Endothelial cell of umbilical vein (primary cell): ENCODE measurements at regions of chr7 and their contacts with region 1.

Region 1: DNA sequence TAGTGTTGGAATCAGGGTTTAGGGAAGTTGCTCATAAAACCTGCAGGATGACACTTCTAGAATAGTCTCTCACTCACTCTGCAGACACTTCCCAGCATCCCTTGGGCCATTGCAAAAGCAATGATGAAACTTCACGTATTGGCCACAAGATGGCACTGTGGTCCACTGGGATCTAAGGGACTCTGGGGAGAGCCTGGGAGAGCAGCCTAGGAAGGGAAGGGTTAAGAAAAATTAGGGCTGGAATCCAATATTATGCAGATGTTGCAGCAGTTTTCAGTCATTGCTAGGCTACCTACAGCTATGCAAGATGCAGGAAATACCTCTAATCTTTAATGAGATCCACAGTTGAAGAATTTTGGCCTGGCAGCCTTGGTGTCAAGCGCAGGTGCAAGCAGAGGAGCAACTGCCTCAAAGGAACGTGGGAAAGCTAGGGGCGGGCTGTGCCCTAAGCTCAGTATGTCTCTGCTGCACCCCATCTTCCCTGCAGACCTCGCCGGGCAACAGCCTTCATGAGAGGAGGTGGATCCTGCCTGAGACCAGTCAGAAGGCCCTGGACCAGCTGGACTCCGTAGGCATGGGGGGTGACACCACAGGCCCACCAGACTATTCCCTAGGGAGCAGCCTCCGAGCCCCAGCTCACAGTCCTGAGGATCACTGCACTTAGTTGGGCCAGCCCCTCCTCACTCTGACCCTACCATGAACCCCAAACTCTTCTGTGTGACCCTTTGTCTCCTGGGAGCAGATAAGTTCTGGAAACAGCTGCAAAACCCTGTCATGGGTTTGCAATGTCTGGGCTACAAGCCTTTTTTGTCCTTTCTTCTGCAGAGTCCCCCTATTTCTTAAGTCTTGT is 127.9 kb upstream of the PRSS58 start:
- DNase-seq: peak; percentile 58
- H3K4me3 ChIP-seq: no peak overlapping the region
- H3K27ac ChIP-seq: no peak overlapping the region
- H3K4me1 ChIP-seq: no peaks in the 10 kb centered on the region
- H3K27me3 ChIP-seq: no peaks in the 10 kb centered on the region
- CTCF ChIP-seq: peak; percentile 73 to 90
- POLR2A ChIP-seq: no peak

Region 2: DNA sequence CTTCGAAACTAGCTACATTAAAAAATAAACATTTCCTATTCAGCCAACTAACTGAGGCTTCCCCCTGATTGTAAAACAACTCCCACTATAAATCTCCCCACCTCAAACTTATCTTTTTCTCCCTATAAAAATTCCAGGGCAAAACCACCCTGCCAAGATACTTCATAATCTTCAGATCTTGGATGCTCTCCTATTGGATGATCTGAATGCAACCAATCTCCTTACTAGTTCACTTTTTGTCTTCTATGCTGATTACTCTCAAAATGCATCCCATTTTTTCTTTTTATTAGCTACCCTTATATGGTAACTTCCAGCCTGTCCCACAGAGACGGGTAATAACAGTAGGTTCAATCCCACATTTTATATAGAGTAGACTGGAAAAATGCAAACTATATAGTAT is 112.9 kb before region 1 on chr7:
- CTCF ChIA-PET with region 1: no interaction called
- POLR2A ChIA-PET with region 1: no interaction called
- dilution Hi-C with region 1: no loop called
- intact Hi-C with region 1: no loop called
- DNase-seq: no peak
- H3K4me3 ChIP-seq: no peak overlapping the region
- H3K27ac ChIP-seq: no peak overlapping the region
- H3K4me1 ChIP-seq: no peaks in the 10 kb centered on the region
- H3K27me3 ChIP-seq: no peaks in the 10 kb centered on the region
- CTCF ChIP-seq: no peak
- POLR2A ChIP-seq: no peak

Region 3: DNA sequence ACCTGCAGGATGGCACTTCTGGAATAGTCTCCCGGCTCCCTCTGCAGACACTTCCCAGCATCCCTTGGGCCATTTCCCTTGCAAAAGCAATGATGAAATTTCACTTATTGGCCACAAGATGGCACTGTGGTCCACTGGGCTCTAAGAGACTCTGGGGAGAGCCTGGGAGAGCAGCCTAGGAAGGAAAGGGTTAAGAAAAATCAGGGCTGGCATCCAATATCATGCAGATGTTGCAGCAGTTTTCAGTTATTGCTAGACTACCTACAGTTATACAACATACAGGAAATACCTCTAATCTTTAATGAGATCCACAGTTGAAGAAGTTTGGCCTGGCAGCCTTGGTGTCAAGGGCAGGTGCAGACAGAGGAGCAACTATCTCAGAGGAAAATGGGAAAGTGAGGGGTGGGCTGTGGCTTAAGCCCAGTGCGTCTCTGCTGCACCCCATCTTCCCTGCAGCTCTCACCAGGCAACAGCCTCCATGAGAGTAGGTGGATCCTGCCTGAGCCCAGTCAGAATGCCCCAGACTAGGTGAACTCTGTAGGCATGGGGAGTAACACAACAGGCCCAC is 27.7 kb before region 1 on chr7:
- CTCF ChIA-PET with region 1: interaction called, 15 read pairs
- POLR2A ChIA-PET with region 1: no interaction called
- dilution Hi-C with region 1: no loop called
- intact Hi-C with region 1: loop called (anchors 1 kb)
- DNase-seq: peak; percentile 62
- H3K4me3 ChIP-seq: no peak overlapping the region
- H3K27ac ChIP-seq: no peak overlapping the region
- H3K4me1 ChIP-seq: no peaks in the 10 kb centered on the region
- H3K27me3 ChIP-seq: no peaks in the 10 kb centered on the region
- CTCF ChIP-seq: peak; percentile 73 to 86
- POLR2A ChIP-seq: no peak

Region 4: GRCh38 chr7:142438235-142438922 is 52.7 kb after region 1 on chr7:
- CTCF ChIA-PET with region 1: interaction called, 3 read pairs
- POLR2A ChIA-PET with region 1: no interaction called
- dilution Hi-C with region 1: no loop called
- intact Hi-C with region 1: loop called (anchors 2 kb)
- DNase-seq: peak; percentile 38
- H3K4me3 ChIP-seq: no peak overlapping the region
- H3K27ac ChIP-seq: no peak overlapping the region
- H3K4me1 ChIP-seq: peaks cover 27% of the 10 kb centered on the region
- H3K27me3 ChIP-seq: no peaks in the 10 kb centered on the region
- CTCF ChIP-seq: peak; percentile 81 to 98
- POLR2A ChIP-seq: no peak